ENCODE measurements at regions of chr22 and their contacts with region 1.

Region 1: DNA sequence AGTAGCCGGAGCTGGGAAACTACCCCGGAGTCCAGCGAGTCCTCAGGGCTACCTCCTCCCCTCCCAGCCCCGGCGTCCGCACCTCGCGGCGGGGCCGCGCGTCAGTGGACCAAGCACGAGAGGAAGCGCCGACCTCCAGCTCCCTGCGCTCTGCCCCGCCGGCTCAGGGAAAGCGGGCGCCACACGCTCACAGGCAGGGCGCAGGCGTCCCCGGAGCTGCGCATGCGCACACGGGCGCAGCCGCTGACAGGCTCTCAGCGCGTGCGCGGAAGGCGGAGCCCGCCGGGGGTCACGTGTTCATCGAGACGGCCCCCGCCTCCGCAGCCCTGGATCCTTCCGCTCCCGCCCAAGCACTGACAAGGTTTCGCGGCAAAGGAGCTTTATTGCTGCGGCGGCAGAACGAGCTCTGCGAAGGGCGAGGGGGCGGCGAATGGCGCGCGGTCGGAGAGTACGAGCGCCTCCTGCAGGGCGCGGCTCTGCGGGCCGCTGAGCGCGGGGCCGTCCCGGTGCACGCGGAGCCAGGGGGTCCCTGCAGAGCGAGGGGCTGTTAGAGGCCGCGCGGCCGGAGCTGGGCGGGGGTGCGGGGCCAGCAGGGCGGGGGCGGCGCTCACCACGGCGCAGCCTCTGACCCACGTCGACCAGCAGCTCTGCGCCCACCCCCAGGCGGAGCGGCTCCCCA is at the start of gene SCO2:
- DNase-seq: peak; percentile 87 to 97
- ATAC-seq: peak; percentile 30 to 67
- H3K4me3 ChIP-seq: peak within 1 kb of the TSS; percentile 70
- H3K27ac ChIP-seq: peak within 1 kb of the TSS; percentile 92 to 99
- H3K4me1 ChIP-seq: peaks cover 20% of the 10 kb centered on the region
- CTCF ChIP-seq: no peak
- EP300 ChIP-seq: no peak
- POLR2A ChIP-seq: peak; percentile 64
- RAD21 ChIP-seq: no peak
- polyA plus RNA-seq, gene SCO2: 0.37 and 1.9 TPM in 2 replicates

Region 2: GRCh38 chr22:50507991-50508884 is 17.3 kb before region 1 on chr22 and contains the start of gene NCAPH2:
- CTCF ChIA-PET with region 1: interaction called, 26 read pairs
- POLR2A ChIA-PET with region 1: interaction called, 36 read pairs
- DNase-seq: peak; percentile 85 to 94
- ATAC-seq: peak; percentile 71 to 74
- H3K4me3 ChIP-seq: peak within 1 kb of the TSS; percentile 94
- H3K27ac ChIP-seq: peak within 1 kb of the TSS; percentile 95 to 97
- H3K4me1 ChIP-seq: peaks cover 15% of the 10 kb centered on the region
- CTCF ChIP-seq: no peak
- EP300 ChIP-seq: no peak
- POLR2A ChIP-seq: peak; percentile 61
- RAD21 ChIP-seq: no peak
- polyA plus RNA-seq, gene NCAPH2: 13.9 and 14.3 TPM in 2 replicates

Region 3: GRCh38 chr22:50537765-50538164 is 12.2 kb after region 1 on chr22:
- CTCF ChIA-PET with region 1: interaction called, 10 read pairs
- POLR2A ChIA-PET with region 1: interaction called, 13 read pairs
- DNase-seq: no peak
- ATAC-seq: no peak
- H3K4me3 ChIP-seq: no peak overlapping the region
- H3K27ac ChIP-seq: peak overlapping the region in 1 of 2 experiments; percentile 92; a peak in 3 of 6 replicates
- H3K4me1 ChIP-seq: peaks cover 57% of the 10 kb centered on the region
- CTCF ChIP-seq: no peak
- EP300 ChIP-seq: no peak
- POLR2A ChIP-seq: no peak
- RAD21 ChIP-seq: no peak

Region 4: GRCh38 chr22:50665738-50666137 is 140.2 kb after region 1 on chr22:
- CTCF ChIA-PET with region 1: no interaction called
- POLR2A ChIA-PET with region 1: no interaction called
- DNase-seq: no peak
- ATAC-seq: no peak
- H3K4me3 ChIP-seq: no peak overlapping the region
- H3K27ac ChIP-seq: no peak overlapping the region
- H3K4me1 ChIP-seq: no peaks in the 10 kb centered on the region
- CTCF ChIP-seq: no peak
- EP300 ChIP-seq: no peak
- POLR2A ChIP-seq: no peak
- RAD21 ChIP-seq: no peak